ENCODE measurements at regions of chr17 and their contacts with region 1.

Region 1: DNA sequence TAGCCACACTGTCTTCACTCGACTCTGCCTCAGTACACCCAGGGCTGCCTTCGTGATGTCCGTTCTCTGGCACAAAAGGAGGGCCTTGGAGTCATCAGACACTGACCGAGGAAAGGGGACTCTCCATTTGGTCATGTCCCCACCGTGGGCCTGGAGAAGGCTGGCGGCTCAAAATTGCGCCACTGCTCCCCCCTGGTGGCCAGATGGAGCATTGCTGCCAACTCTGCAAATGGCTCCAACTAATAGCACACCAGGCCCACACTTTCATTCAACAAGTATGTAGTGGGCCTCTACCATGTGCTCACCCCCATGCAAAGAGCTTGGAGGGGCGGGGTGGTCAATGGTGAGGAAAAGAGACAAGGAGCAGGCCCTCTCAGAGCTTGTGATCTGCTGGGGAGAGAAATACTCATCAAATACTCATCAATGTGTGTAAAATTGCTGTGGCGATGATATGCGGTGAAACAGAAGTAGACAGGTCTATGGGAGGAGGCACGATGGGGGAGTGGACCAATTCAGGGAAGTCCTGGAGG is 5.2 kb upstream of the GRIN2C start:
- DNase-seq: peak; percentile 73 to 82 (median 78)
- ATAC-seq: peak; percentile 67
- H3K4me3 ChIP-seq: no peak overlapping the region
- H3K27ac ChIP-seq: no peak overlapping the region
- H3K4me1 ChIP-seq: peaks cover 21% of the 10 kb centered on the region
- H3K27me3 ChIP-seq: peaks cover 4 to 22% of the 10 kb centered on the region in 2 donors
- CTCF ChIP-seq: peak; percentile 90 to 94 (median 92)
- POLR2A ChIP-seq: no peak

Region 2: GRCh38 chr17:74790161-74791054 is 74.5 kb before region 1 on chr17:
- intact Hi-C with region 1: loop called (anchors 5 kb)
- DNase-seq: no peak
- ATAC-seq: no peak
- H3K4me3 ChIP-seq: no peak overlapping the region
- H3K27ac ChIP-seq: no peak overlapping the region
- H3K4me1 ChIP-seq: no peaks in the 10 kb centered on the region
- H3K27me3 ChIP-seq: no peaks in the 10 kb centered on the region
- CTCF ChIP-seq: no peak
- POLR2A ChIP-seq: no peak

Measured in body of pancreas (tissue), 4 donors.